Caco-2 (cell line): ENCODE measurements at regions of chr3 and their contacts with region 1.

Region 1: GRCh38 chr3:13507769-13508339 is 27.7 kb downstream of the HDAC11 start:
- DNase-seq: no peak
- H3K4me3 ChIP-seq: no peak overlapping the region
- H3K4me3 Mint-ChIP-seq: no peak overlapping the region
- H3K27ac Mint-ChIP-seq: no peak overlapping the region
- H3K4me1 ChIP-seq: peaks cover 9% of the 10 kb centered on the region
- H3K4me1 Mint-ChIP-seq: peaks cover 4% of the 10 kb centered on the region
- H3K27me3 ChIP-seq: no peaks in the 10 kb centered on the region
- H3K27me3 Mint-ChIP-seq: no peaks in the 10 kb centered on the region
- CTCF ChIP-seq: no peak

Region 2: GRCh38 chr3:13495921-13496723 is 11.7 kb before region 1 on chr3:
- CTCF ChIA-PET with region 1: interaction called, 17 read pairs
- POLR2A ChIA-PET with region 1: no interaction called
- intact Hi-C with region 1: no loop called
- DNase-seq: peak; percentile 65 to 83
- H3K4me3 ChIP-seq: no peak overlapping the region
- H3K4me3 Mint-ChIP-seq: no peak overlapping the region
- H3K27ac Mint-ChIP-seq: no peak overlapping the region
- H3K4me1 ChIP-seq: no peaks in the 10 kb centered on the region
- H3K4me1 Mint-ChIP-seq: no peaks in the 10 kb centered on the region
- H3K27me3 ChIP-seq: no peaks in the 10 kb centered on the region
- H3K27me3 Mint-ChIP-seq: no peaks in the 10 kb centered on the region
- CTCF ChIP-seq: peak; percentile 93 to 96

Region 3: DNA sequence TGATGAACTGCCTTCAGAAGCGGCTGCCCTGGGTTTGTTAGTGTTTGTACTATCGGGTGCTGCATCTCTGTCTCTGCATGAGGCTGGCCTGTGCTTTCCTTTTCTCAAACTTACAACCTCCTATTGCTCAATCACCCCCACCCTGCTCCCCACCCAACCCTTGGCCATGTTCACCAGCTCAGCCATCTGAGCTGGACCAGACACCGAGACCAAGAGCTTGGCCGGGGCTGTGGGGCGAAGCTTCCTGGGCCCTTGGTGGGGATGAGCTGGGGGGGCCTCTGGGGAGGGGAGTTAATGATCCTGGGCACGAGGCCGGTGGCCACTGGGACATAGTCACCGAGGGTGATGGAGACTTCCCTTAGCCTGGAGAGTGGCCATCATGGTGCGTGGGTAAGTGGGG is 24.3 kb after region 1 on chr3:
- CTCF ChIA-PET with region 1: interaction called, 12 read pairs
- POLR2A ChIA-PET with region 1: no interaction called
- intact Hi-C with region 1: no loop called
- DNase-seq: no peak
- H3K4me3 ChIP-seq: no peak overlapping the region
- H3K4me3 Mint-ChIP-seq: no peak overlapping the region
- H3K27ac Mint-ChIP-seq: no peak overlapping the region
- H3K4me1 ChIP-seq: no peaks in the 10 kb centered on the region
- H3K4me1 Mint-ChIP-seq: peaks cover 19% of the 10 kb centered on the region
- H3K27me3 ChIP-seq: no peaks in the 10 kb centered on the region
- H3K27me3 Mint-ChIP-seq: no peaks in the 10 kb centered on the region
- CTCF ChIP-seq: no peak

Region 4: GRCh38 chr3:13548696-13549622 is 41.1 kb after region 1 on chr3 and contains the start of gene FBLN2:
- CTCF ChIA-PET with region 1: no interaction called
- POLR2A ChIA-PET with region 1: no interaction called
- intact Hi-C with region 1: loop called (anchors 5 kb)
- DNase-seq: peak; percentile 55 to 87
- H3K4me3 ChIP-seq: peak within 1 kb of the TSS; percentile 46
- H3K4me3 Mint-ChIP-seq: peak within 1 kb of the TSS; percentile 76
- H3K27ac Mint-ChIP-seq: peak within 1 kb of the TSS; percentile 73
- H3K4me1 ChIP-seq: peaks cover 24% of the 10 kb centered on the region
- H3K4me1 Mint-ChIP-seq: peaks cover 32% of the 10 kb centered on the region
- H3K27me3 ChIP-seq: no peaks in the 10 kb centered on the region
- H3K27me3 Mint-ChIP-seq: no peaks in the 10 kb centered on the region
- CTCF ChIP-seq: no peak
- total RNA-seq, gene FBLN2: 36.7 and 48.8 TPM in 2 replicates